ENCODE measurements at regions of chr5 and their contacts with region 1.

Region 1: DNA sequence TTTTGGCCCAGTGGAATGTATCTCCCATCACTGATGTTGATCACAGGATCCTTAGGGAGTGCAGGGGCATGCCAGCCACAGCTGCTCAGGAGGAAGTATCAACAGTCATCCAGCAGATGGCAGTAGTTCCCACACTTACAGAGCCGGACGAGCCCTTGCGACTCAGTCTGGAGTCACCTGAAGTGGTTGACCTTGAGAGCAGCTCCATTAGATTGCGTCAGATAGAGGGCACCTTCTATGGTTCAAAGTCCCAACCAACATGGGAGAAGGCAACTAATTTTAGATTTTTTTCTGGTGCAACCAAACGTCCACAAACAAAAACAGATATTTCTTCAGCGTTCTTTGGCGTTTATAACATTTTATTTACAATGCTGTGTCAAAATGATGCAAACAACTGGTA is 124.5 kb downstream of the EGFLAM start:
- DNase-seq: peak; percentile 68
- ATAC-seq: peak; percentile 92
- H3K4me3 Mint-ChIP-seq: no peak overlapping the region
- H3K27ac Mint-ChIP-seq: no peak overlapping the region
- H3K4me1 Mint-ChIP-seq: peaks cover 8% of the 10 kb centered on the region
- H3K27me3 Mint-ChIP-seq: peaks cover 22% of the 10 kb centered on the region
- CTCF ChIP-seq: peak; percentile 66

Region 2: GRCh38 chr5:38265546-38266179 is 117.2 kb before region 1 on chr5:
- CTCF ChIA-PET with region 1: interaction called, 11 read pairs
- POLR2A ChIA-PET with region 1: no interaction called
- intact Hi-C with region 1: no loop called
- DNase-seq: peak; percentile 68
- ATAC-seq: peak; percentile 65
- H3K4me3 Mint-ChIP-seq: no peak overlapping the region
- H3K27ac Mint-ChIP-seq: no peak overlapping the region
- H3K4me1 Mint-ChIP-seq: no peaks in the 10 kb centered on the region
- H3K27me3 Mint-ChIP-seq: peaks cover 45% of the 10 kb centered on the region
- CTCF ChIP-seq: peak; percentile 66

Region 3: GRCh38 chr5:38369692-38370091 is 13.2 kb before region 1 on chr5:
- CTCF ChIA-PET with region 1: interaction called, 14 read pairs
- POLR2A ChIA-PET with region 1: no interaction called
- intact Hi-C with region 1: no loop called
- DNase-seq: no peak
- ATAC-seq: no peak
- H3K4me3 Mint-ChIP-seq: no peak overlapping the region
- H3K27ac Mint-ChIP-seq: no peak overlapping the region
- H3K4me1 Mint-ChIP-seq: peaks cover 11% of the 10 kb centered on the region
- H3K27me3 Mint-ChIP-seq: peaks cover 1% of the 10 kb centered on the region
- CTCF ChIP-seq: no peak

Region 4: GRCh38 chr5:38396766-38397165 is 13.9 kb after region 1 on chr5:
- CTCF ChIA-PET with region 1: interaction called, 22 read pairs
- POLR2A ChIA-PET with region 1: no interaction called
- intact Hi-C with region 1: no loop called
- DNase-seq: no peak
- ATAC-seq: no peak
- H3K4me3 Mint-ChIP-seq: no peak overlapping the region
- H3K27ac Mint-ChIP-seq: no peak overlapping the region
- H3K4me1 Mint-ChIP-seq: no peaks in the 10 kb centered on the region
- H3K27me3 Mint-ChIP-seq: peaks cover 23% of the 10 kb centered on the region
- CTCF ChIP-seq: no peak

Region 5: GRCh38 chr5:38468978-38469706 is 86.2 kb after region 1 on chr5:
- CTCF ChIA-PET with region 1: no interaction called
- POLR2A ChIA-PET with region 1: no interaction called
- intact Hi-C with region 1: no loop called
- DNase-seq: no peak
- ATAC-seq: no peak
- H3K4me3 Mint-ChIP-seq: no peak overlapping the region
- H3K27ac Mint-ChIP-seq: no peak overlapping the region
- H3K4me1 Mint-ChIP-seq: no peaks in the 10 kb centered on the region
- H3K27me3 Mint-ChIP-seq: peaks cover 37% of the 10 kb centered on the region
- CTCF ChIP-seq: no peak

Region 6: GRCh38 chr5:38681966-38682365 is 299.1 kb after region 1 on chr5:
- CTCF ChIA-PET with region 1: no interaction called
- POLR2A ChIA-PET with region 1: no interaction called
- intact Hi-C with region 1: no loop called
- DNase-seq: no peak
- ATAC-seq: no peak
- H3K4me3 Mint-ChIP-seq: no peak overlapping the region
- H3K27ac Mint-ChIP-seq: no peak overlapping the region
- H3K4me1 Mint-ChIP-seq: no peaks in the 10 kb centered on the region
- H3K27me3 Mint-ChIP-seq: no peaks in the 10 kb centered on the region
- CTCF ChIP-seq: no peak

Region 7: GRCh38 chr5:38809388-38810359 is 426.8 kb after region 1 on chr5:
- CTCF ChIA-PET with region 1: interaction called, 28 read pairs
- POLR2A ChIA-PET with region 1: no interaction called
- intact Hi-C with region 1: no loop called
- DNase-seq: peak; percentile 77
- ATAC-seq: peak; percentile 69
- H3K4me3 Mint-ChIP-seq: no peak overlapping the region
- H3K27ac Mint-ChIP-seq: no peak overlapping the region
- H3K4me1 Mint-ChIP-seq: peaks cover 8% of the 10 kb centered on the region
- H3K27me3 Mint-ChIP-seq: peaks cover 27% of the 10 kb centered on the region
- CTCF ChIP-seq: peak; percentile 77